WTC11 (cell line): ENCODE measurements at regions of chr9 and their contacts with region 1.

Region 1: DNA sequence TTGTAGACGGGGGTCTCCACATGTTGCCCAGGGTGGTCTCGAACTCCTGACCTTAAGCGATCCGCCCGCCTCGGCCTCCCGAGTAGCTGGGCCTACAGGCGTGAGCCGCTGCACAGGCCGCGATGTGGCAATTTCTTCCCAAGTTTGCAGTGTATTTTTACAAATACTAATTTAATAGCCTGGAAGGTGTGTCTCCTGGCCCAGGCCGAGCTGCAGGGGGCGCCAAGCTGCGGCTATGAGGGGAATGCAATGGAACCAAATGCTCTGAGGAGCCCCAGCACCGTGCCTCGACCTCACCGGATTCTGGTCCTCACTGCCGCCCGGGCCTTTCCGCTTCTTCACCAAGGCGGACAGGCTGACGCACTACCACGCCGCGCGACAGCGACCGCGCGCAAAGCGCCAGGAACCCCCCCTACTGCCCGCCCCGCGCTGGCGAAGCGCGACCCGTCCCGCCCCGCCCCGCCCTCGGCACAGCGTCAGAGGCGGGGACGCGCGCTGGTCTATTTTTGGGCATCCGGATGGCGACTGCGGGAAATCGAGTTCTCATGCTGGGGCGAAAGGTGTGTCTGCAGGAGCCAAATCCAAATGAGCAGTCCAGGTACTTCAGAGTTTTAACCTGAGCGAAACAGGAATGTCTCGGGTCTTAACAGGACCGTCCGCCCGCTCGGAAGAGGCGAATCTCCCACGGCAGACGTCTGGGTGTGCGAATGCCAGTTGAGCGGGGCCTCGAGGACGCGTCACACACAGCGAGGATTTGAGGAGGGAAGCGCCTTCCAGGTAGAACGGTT is 31.6 kb upstream of the PRXL2C start:
- DNase-seq: peak; percentile 89
- ATAC-seq: peak; percentile 96
- H3K4me3 Mint-ChIP-seq: peak overlapping the region; percentile 91
- H3K27ac Mint-ChIP-seq: peak overlapping the region; percentile 92
- H3K4me1 Mint-ChIP-seq: peaks cover 3% of the 10 kb centered on the region
- H3K27me3 Mint-ChIP-seq: peaks cover 4% of the 10 kb centered on the region
- CTCF ChIP-seq: peak; percentile 57

Region 2: GRCh38 chr9:96441798-96442445 is 244.8 kb before region 1 on chr9:
- CTCF ChIA-PET with region 1: interaction called, 10 read pairs
- POLR2A ChIA-PET with region 1: no interaction called
- DNase-seq: no peak
- ATAC-seq: peak; percentile 60
- H3K4me3 Mint-ChIP-seq: no peak overlapping the region
- H3K27ac Mint-ChIP-seq: no peak overlapping the region
- H3K4me1 Mint-ChIP-seq: no peaks in the 10 kb centered on the region
- H3K27me3 Mint-ChIP-seq: no peaks in the 10 kb centered on the region; the same call in 1 of the 2 replicates
- CTCF ChIP-seq: peak; percentile 51